Aorta (tissue), 5 donors: ENCODE measurements at regions of chr5 and their contacts with region 1.

Region 1: GRCh38 chr5:81301271-81302015 is at the start of gene ZCCHC9:
- DNase-seq: peak; percentile 97 to 98
- ATAC-seq: peak; percentile 98
- H3K4me3 ChIP-seq: peak within 1 kb of the TSS; percentile 41 to 46
- H3K27ac ChIP-seq: peak within 1 kb of the TSS; percentile 57 to 87
- H3K4me1 ChIP-seq: peaks cover 0 to 3% of the 10 kb centered on the region in 2 donors
- H3K27me3 ChIP-seq: no peaks in the 10 kb centered on the region
- total RNA-seq, gene ZCCHC9: 21.7 to 24.9 TPM

Region 2: GRCh38 chr5:80591352-80591751 is 710.1 kb before region 1 on chr5:
- intact Hi-C with region 1: no loop called
- DNase-seq: no peak
- ATAC-seq: no peak
- H3K4me3 ChIP-seq: no peak overlapping the region
- H3K27ac ChIP-seq: no peak overlapping the region
- H3K4me1 ChIP-seq: no peaks in the 10 kb centered on the region
- H3K27me3 ChIP-seq: no peaks in the 10 kb centered on the region

Region 3: GRCh38 chr5:81233080-81233634 is 68.3 kb before region 1 on chr5 and contains the start of gene CKMT2:
- intact Hi-C with region 1: loop called (anchors 2 to 5 kb)
- DNase-seq: peak; percentile 90 to 94
- ATAC-seq: peak; percentile 90
- H3K4me3 ChIP-seq: peak within 1 kb of the TSS; percentile 5 to 29
- H3K27ac ChIP-seq: peak within 1 kb of the TSS; percentile 73 to 92
- H3K4me1 ChIP-seq: no peaks in the 10 kb centered on the region
- H3K27me3 ChIP-seq: no peaks in the 10 kb centered on the region
- total RNA-seq, gene CKMT2: 24.1 to 29.3 TPM

Region 4: GRCh38 chr5:81352954-81353588 is 51.6 kb after region 1 on chr5:
- intact Hi-C with region 1: no loop called
- DNase-seq: no peak
- ATAC-seq: no peak
- H3K4me3 ChIP-seq: no peak overlapping the region
- H3K27ac ChIP-seq: no peak overlapping the region
- H3K4me1 ChIP-seq: no peaks in the 10 kb centered on the region
- H3K27me3 ChIP-seq: no peaks in the 10 kb centered on the region